ENCODE measurements at regions of chr1 and their contacts with region 1.

Region 1: GRCh38 chr1:9289090-9289534 is 3.6 kb upstream of the SPSB1 start:
- DNase-seq: peak; percentile 58 to 94 (median 73)
- ATAC-seq: peak in 2 of 4 donors; percentile 36 to 44
- H3K4me3 ChIP-seq: no peak overlapping the region
- H3K27ac ChIP-seq: no peak overlapping the region
- H3K4me1 ChIP-seq: peaks cover 0 to 9% (median 0%) of the 10 kb centered on the region in 3 donors
- H3K27me3 ChIP-seq: no peaks in the 10 kb centered on the region
- CTCF ChIP-seq: peak; percentile 73 to 80 (median 74)

Region 2: GRCh38 chr1:9455487-9456234 is 166.5 kb after region 1 on chr1:
- intact Hi-C with region 1: loop called in 2 of 3 experiments (anchors 5 to 10 kb)
- DNase-seq: peak; percentile 62 to 88 (median 68)
- ATAC-seq: peak; percentile 67 to 78 (median 74)
- H3K4me3 ChIP-seq: no peak overlapping the region
- H3K27ac ChIP-seq: no peak overlapping the region
- H3K4me1 ChIP-seq: peaks cover 0 to 23% (median 22%) of the 10 kb centered on the region in 3 donors
- H3K27me3 ChIP-seq: no peaks in the 10 kb centered on the region
- CTCF ChIP-seq: peak; percentile 25 to 71 (median 66)

Region 3: DNA sequence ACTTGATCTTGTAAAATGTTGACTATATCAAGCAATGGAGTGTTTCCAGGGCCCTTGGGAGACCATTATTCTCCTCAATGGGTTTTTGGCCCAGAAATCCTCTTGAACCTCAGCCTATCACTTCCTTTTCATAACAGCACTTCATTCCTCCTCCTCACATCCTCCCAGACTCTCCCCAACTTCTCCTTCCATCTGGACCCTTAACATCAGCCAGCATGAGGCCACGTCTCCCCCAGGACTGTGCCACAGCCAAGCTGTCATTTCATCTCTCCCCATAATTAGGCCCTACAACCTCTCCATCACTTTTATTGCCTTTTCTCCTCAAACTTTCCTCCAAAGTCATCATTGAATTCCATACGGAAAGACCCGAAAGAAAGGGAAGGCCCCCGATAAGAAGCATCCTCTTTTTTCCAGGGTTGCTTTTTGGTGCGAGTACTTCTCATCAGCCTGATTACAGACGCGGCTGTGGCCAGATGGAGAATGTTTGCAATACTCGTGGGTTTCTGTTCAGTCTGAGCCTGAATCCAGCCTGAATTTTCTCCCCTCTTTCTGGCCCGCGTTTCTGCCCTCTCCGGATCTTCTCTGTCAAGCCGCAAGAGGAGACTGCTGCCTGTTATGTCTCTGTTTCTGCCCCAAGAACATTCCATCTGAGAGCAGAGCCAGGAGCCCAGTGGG is 197.5 kb after region 1 on chr1:
- intact Hi-C with region 1: loop called in 2 of 3 experiments (anchors 5 to 10 kb)
- DNase-seq: no peak
- ATAC-seq: no peak
- H3K4me3 ChIP-seq: no peak overlapping the region
- H3K27ac ChIP-seq: no peak overlapping the region
- H3K4me1 ChIP-seq: no peaks in the 10 kb centered on the region
- H3K27me3 ChIP-seq: no peaks in the 10 kb centered on the region
- CTCF ChIP-seq: no peak

Measured in pancreas (tissue), 10 donors.